IMR-90 (cell line): ENCODE measurements at regions of chr2 and their contacts with region 1.

Region 1: DNA sequence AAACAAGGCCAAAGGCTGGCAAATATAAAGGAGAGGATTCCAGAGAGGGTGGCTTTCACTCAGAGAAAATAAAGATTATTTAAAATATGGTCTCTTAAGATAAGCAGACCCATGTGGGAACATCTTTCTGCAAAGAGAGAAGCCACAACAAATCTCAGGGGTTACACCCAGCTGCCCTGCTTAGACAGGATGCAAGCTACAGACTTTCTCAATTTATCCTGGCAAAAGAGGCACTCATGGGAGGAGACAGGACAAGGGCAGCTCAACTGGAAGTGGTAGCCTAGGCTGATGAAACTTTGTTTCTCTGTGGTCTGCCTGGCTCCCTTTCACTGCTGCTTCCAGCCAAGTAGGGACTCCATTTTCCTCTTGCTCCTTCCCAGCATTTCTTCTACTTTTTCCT is 25.9 kb upstream of the SULT1C4 start:
- DNase-seq: no peak
- ATAC-seq: no peak
- H3K4me3 ChIP-seq: no peak overlapping the region
- H3K27ac ChIP-seq: no peak overlapping the region
- H3K4me1 ChIP-seq: no peaks in the 10 kb centered on the region
- H3K27me3 ChIP-seq: peaks cover 19% of the 10 kb centered on the region
- CTCF ChIP-seq: no peak
- POLR2A ChIP-seq: no peak
- RAD21 ChIP-seq: no peak

Region 2: GRCh38 chr2:108215794-108216211 is 136.1 kb before region 1 on chr2:
- CTCF ChIA-PET with region 1: no interaction called
- POLR2A ChIA-PET with region 1: no interaction called
- dilution Hi-C with region 1: no loop called
- in situ Hi-C with region 1: no loop called
- intact Hi-C with region 1: loop called (anchors 5 kb)
- DNase-seq: peak; percentile 51
- ATAC-seq: peak; percentile 71
- H3K4me3 ChIP-seq: no peak overlapping the region
- H3K27ac ChIP-seq: no peak overlapping the region
- H3K4me1 ChIP-seq: no peaks in the 10 kb centered on the region
- H3K27me3 ChIP-seq: no peaks in the 10 kb centered on the region
- CTCF ChIP-seq: peak; percentile 58
- POLR2A ChIP-seq: no peak
- RAD21 ChIP-seq: peak; percentile 68

Region 3: GRCh38 chr2:108315444-108315934 is 36.4 kb before region 1 on chr2:
- CTCF ChIA-PET with region 1: no interaction called
- POLR2A ChIA-PET with region 1: no interaction called
- dilution Hi-C with region 1: no loop called
- in situ Hi-C with region 1: no loop called
- intact Hi-C with region 1: no loop called
- DNase-seq: no peak
- ATAC-seq: no peak
- H3K4me3 ChIP-seq: no peak overlapping the region
- H3K27ac ChIP-seq: no peak overlapping the region
- H3K4me1 ChIP-seq: no peaks in the 10 kb centered on the region
- H3K27me3 ChIP-seq: no peaks in the 10 kb centered on the region; the same call in 1 of the 2 replicates
- CTCF ChIP-seq: no peak
- POLR2A ChIP-seq: no peak
- RAD21 ChIP-seq: no peak

Region 4: GRCh38 chr2:108448678-108449493 is 97.0 kb after region 1 on chr2 and contains the start of gene GCC2:
- CTCF ChIA-PET with region 1: interaction called, 6 read pairs
- POLR2A ChIA-PET with region 1: no interaction called
- dilution Hi-C with region 1: no loop called
- in situ Hi-C with region 1: no loop called
- intact Hi-C with region 1: loop called (anchors 1 kb)
- DNase-seq: peak; percentile 91
- ATAC-seq: peak; percentile 97
- H3K4me3 ChIP-seq: peak within 1 kb of the TSS; percentile 86
- H3K27ac ChIP-seq: peak within 1 kb of the TSS; percentile 90
- H3K4me1 ChIP-seq: peaks cover 3% of the 10 kb centered on the region; the same call in 1 of the 2 replicates
- H3K27me3 ChIP-seq: no peaks in the 10 kb centered on the region
- CTCF ChIP-seq: no peak
- POLR2A ChIP-seq: peak; percentile 91
- RAD21 ChIP-seq: peak; percentile 11
- total RNA-seq, gene GCC2: 8.6 and 16.7 TPM in 2 replicates

Region 5: DNA sequence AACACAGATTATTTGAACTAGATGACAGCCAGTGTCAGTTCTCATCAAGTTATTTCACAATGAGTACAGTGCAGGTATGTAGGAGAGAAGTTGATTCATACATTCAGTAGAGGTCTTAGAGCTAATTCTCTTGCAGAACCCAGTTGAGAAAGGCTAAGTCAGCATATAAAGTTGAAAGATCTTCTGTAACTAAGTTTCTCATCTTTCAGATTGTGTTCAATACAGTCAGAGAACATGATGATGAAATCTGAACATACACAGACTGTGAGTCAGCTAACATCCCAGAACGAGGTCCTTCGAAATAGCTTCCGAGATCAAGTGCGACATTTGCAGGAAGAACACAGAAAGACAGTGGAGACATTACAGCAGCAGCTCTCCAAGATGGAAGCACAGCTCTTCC is 140.5 kb after region 1 on chr2:
- CTCF ChIA-PET with region 1: no interaction called
- POLR2A ChIA-PET with region 1: no interaction called
- dilution Hi-C with region 1: no loop called
- in situ Hi-C with region 1: no loop called
- intact Hi-C with region 1: loop called (anchors 1 kb)
- DNase-seq: peak; percentile 94
- ATAC-seq: peak; percentile 93
- H3K4me3 ChIP-seq: no peak overlapping the region
- H3K27ac ChIP-seq: no peak overlapping the region
- H3K4me1 ChIP-seq: peaks cover 3% of the 10 kb centered on the region; the same call in 1 of the 2 replicates
- H3K27me3 ChIP-seq: no peaks in the 10 kb centered on the region
- CTCF ChIP-seq: no peak
- POLR2A ChIP-seq: no peak
- RAD21 ChIP-seq: peak; percentile 38; the same call in 1 of the 2 replicates

Region 6: GRCh38 chr2:108637304-108637669 is 285.4 kb after region 1 on chr2:
- CTCF ChIA-PET with region 1: interaction called, 3 read pairs
- POLR2A ChIA-PET with region 1: no interaction called
- dilution Hi-C with region 1: no loop called
- in situ Hi-C with region 1: no loop called
- intact Hi-C with region 1: loop called (anchors 1 kb)
- DNase-seq: peak; percentile 96
- ATAC-seq: peak; percentile 42
- H3K4me3 ChIP-seq: no peak overlapping the region
- H3K27ac ChIP-seq: peak overlapping the region; percentile 6; the same call in 1 of the 2 replicates
- H3K4me1 ChIP-seq: peaks cover 30% of the 10 kb centered on the region
- H3K27me3 ChIP-seq: no peaks in the 10 kb centered on the region
- CTCF ChIP-seq: no peak
- POLR2A ChIP-seq: peak; percentile 63; the same call in 1 of the 2 replicates
- RAD21 ChIP-seq: no peak